Activated T-helper 2 cell treated with anti-CD3 and anti-CD28 coated beads, Interferon-gamma antibody, Interleukin-2, Interleukin-4, amounts not matched to agents 10 μg/mL and 5 μg/mL and 100 μg/mL, durations not matched to agents 14 hours and 24 hours and 36 hours (primary cell): ENCODE measurements at regions of chr14 and their contacts with region 1.

Region 1: GRCh38 chr14:23095196-23096108 is at the start of gene C14orf119:
- DNase-seq: peak; percentile 99
- H3K4me3 Mint-ChIP-seq: no peak within 1 kb of the TSS
- H3K27ac Mint-ChIP-seq: no peak within 1 kb of the TSS
- H3K4me1 Mint-ChIP-seq: peaks cover 33% of the 10 kb centered on the region
- H3K27me3 Mint-ChIP-seq: no peaks in the 10 kb centered on the region
- total RNA-seq, gene C14orf119: 57.7 and 65.2 TPM in 2 replicates

Region 2: GRCh38 chr14:23034483-23035302 is 60.8 kb before region 1 on chr14 and contains the start of gene PSMB5:
- intact Hi-C with region 1: loop called (anchors 2 kb)
- DNase-seq: peak; percentile 86
- H3K4me3 Mint-ChIP-seq: peak within 1 kb of the TSS; percentile 92
- H3K27ac Mint-ChIP-seq: peak within 1 kb of the TSS; percentile 88
- H3K4me1 Mint-ChIP-seq: peaks cover 22% of the 10 kb centered on the region
- H3K27me3 Mint-ChIP-seq: peaks cover 2% of the 10 kb centered on the region
- total RNA-seq, gene PSMB5: 124 and 134 TPM in 2 replicates

Region 3: DNA sequence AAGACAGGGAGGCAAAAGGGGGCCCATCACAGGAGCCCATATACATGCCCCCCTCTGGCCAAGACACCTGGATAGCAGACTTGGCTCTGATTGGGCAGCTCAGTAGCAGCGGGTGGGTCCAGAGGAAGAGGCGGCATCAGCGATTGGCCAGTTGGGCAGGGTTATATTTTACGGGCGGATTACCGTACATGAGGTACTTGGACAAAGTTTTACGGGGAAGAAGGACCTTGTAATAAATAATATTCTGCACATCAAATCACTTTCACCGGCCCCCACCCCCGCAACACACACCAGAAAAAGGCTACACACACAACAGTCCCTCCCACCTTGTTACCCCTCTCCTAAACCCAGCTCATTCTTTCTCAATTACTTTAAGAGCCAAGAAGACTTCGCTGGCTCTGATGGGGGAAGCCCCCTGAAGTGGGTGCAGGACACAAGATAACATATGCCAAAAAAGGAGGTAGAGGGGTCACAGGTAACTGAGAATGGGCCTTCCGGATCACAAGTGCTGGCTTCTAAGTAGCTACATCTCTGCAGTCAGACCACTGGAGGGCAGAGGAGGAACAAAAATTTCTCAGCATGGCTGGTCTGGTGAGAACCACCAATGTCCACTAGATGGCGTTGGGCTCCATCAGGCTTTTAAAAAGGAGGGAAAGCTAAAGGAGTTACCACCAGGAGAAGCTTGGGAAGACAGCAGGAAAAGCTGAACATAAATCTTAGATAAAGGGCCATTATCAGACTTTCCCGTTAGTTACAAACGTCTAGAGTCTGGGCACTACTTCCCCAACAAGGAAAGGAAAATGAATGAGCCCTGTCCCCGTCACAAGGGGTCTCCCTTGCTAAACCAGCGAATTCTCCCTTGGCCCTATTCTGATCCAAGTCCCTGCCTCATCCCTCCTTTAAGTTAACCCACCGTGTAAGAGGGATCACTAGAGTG is 26.7 kb before region 1 on chr14:
- intact Hi-C with region 1: loop called (anchors 1 kb)
- DNase-seq: peak; percentile 70
- H3K4me3 Mint-ChIP-seq: peak overlapping the region; percentile 54
- H3K27ac Mint-ChIP-seq: peak overlapping the region; percentile 49
- H3K4me1 Mint-ChIP-seq: peaks cover 26% of the 10 kb centered on the region
- H3K27me3 Mint-ChIP-seq: no peaks in the 10 kb centered on the region

Region 4: DNA sequence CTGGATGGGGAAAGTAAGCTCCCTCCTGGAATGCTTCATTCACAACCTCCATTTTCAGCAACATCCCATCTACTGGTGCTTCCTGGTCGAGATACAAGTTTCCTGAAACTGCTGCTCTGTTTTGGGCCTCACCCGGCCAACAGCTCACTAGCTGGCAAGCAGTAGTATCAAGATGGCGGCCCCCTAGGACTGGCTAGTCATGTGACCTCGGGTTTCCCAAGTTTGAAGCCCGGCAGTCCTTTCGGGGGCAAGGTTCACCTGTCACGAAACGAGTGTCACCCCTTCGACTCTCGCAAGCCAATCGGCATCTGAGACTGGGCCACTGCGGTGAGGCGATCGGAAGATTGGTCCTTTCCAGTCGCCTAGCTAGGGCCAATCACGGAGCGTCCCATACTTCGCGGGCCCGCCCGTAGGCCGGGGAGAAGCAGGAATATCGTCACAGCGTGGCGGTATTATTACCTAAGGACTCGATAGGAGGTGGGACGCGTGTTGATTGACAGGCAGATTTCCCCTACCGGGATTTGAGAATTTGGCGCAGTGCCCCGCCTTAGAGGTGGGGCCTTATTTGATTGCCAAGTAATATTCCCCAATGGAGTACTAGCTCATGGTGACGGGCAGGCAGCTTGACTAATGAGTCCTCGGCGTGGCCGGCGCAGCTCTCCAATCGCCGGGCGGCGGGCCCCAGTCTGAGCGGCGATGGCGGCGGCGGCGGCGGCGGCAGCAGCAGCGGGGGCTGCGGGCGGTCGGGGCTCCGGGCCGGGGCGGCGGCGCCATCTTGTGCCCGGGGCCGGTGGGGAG is 225.5 kb after region 1 on chr14 and contains the start of gene PABPN1:
- intact Hi-C with region 1: loop called (anchors 1 kb)
- DNase-seq: peak; percentile 98
- H3K4me3 Mint-ChIP-seq: peak within 1 kb of the TSS; percentile 88
- H3K27ac Mint-ChIP-seq: peak within 1 kb of the TSS; percentile 86
- H3K4me1 Mint-ChIP-seq: peaks cover 23% of the 10 kb centered on the region
- H3K27me3 Mint-ChIP-seq: no peaks in the 10 kb centered on the region
- total RNA-seq, gene PABPN1: 241 and 259 TPM in 2 replicates